Posterior vena cava (tissue), 2 donors: ENCODE measurements at regions of chr13 and their contacts with region 1.

Region 1: DNA sequence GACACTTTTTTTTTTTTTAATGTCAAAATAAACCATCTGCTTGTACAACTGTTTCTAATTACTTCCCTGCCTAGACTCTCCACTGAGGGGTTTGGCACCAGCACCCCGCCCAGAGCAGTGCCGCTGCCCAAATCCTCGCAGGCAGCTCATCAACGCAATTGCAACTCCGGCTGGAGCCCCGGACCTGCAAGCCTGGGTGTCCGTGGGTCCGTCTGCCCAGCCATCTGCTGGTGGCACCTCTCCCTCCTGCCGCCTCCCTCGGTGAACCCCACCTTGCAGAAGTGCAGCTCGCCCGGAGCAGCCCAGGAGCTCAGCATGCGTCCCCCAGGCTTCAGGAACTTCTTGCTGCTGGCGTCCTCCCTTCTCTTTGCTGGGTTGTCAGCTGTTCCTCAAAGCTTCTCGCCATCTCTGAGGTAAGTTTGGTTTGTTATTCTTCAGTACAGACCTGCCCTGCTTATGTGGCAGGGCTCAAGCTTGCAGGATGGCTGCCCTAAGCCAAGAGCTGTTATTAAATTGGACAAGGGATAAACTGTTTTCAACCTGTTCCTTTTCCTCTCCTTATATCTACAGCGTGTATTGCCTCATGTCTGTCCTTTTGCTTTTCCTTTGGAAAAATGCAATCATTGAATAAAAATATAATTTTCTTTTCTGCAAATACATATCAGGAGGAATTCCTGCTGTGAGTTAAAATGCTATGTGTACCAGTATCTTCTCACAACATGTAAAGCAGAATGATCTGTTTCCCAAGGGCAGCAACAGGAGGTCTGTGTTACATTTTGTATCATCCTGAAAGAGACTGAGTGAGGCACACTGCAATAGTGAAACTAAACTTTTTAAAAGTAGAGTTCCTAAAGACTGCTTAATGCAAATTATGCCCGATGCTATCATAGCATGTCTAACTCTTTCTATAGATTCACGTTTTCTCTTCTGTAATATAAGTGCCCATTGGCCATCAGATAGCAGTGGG is at the start of gene ITGBL1:
- DNase-seq: no peak
- total RNA-seq, gene ITGBL1: 75.1 to 118 TPM

Region 2: DNA sequence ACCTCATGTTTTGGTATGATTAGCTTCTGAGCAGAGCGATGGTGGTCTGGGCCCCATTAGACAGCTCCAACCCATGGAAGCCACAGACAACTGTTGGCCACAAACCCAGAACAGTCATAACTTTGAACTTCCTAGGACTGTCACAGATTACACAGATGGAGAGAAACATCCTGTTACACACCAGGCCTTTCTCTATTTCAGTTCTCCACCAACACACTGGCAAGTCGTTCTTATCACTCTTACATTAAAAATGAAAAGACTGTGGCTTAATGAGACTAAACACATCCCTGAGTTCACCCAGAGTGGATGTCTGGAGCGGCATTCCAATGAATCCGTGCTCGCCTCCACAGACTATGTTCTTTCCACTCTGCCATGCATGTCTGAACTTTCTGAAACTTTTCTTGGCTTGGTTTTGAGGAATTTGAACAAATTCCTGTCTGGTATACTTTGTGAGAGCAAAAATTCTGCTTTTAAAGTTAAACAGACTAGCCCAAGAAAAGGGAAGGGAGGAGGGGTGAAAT is 145.6 kb before region 1 on chr13:
- intact Hi-C with region 1: loop called in 1 of 2 experiments (anchors 10 kb)
- DNase-seq: no peak

Region 3: DNA sequence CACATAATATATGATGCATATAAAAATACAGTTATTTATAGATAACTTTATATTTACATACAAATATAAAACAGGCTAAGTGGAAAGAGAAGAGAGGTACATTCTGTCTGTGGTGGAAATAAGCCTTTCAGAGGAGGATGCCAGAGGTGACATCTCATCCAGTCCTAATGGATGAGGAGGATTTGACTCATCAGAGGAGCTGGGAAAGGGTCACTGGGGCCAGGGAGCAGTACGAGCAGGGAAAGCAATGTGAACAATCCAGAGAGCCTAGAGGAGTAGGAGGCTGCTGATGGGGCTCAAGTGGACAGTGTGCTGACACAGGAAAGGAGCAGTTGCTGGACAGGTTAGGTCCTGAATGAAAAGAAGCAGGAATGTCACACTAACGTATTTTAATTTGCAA is 55.1 kb before region 1 on chr13:
- intact Hi-C with region 1: loop called in 1 of 2 experiments (anchors 10 kb)
- DNase-seq: no peak

Region 4: DNA sequence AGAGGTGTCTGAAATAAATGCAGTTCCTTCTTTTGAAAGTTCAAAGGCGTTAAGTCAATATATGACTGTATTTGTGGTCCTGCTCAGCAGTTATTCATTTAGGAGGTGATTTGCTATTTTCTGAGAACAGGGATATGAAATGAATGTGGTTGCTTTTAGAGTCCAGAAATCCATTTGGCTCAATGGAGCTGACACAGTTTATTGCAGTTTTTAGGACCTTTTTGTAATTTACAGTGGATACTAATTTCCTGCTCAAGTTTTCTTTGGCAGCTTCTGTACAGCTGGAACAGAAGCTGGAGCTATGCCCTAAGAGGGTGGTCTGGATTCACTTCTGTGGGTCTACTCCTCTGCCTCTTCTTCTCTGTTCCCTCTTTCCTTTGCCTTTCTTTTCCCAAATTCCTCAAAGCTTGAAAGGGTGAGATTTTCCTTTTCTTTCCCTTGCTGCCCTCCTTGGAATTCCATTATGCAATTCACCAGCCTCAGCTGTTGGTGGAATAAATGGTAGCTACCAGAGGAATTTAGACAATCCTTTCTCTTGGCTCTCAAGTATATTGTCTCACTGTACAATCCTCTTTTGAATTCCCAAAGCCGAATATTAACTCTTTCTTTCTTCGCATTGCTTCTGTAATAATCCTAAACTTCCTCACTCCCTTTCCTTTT is 39.6 kb after region 1 on chr13:
- intact Hi-C with region 1: no loop called
- DNase-seq: no peak